ENCODE measurements at regions of chr2 and their contacts with region 1.

Region 1: DNA sequence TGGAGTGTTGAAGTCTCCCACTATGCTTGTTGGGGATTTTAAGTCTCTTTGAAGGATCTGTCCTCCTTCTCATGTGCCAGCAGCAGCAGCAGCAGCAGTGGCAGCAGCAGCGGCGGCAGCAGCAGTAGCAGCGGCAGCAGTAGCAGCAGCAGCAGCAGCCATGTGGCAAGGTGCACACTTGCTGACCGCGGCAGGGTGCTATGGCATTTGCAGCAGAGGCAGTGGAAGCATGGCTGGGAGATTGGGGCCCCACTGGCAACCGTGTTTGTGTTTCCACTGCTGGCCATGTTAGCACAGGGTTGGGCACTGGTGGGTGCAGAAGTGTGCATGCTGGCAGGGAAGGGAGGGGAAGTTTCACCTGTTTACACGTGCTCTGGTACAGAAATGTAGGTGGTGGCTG is 280.1 kb downstream of the NUP35 start:
- DNase-seq: no peak
- ATAC-seq: no peak
- H3K4me3 ChIP-seq: no peak overlapping the region
- H3K27ac ChIP-seq: no peak overlapping the region
- H3K4me1 ChIP-seq: no peaks in the 10 kb centered on the region
- H3K27me3 ChIP-seq: no peaks in the 10 kb centered on the region
- CTCF ChIP-seq: no peak
- POLR2A ChIP-seq: no peak
- RAD21 ChIP-seq: no peak

Region 2: GRCh38 chr2:182715121-182715895 is 689.1 kb before region 1 on chr2:
- CTCF ChIA-PET with region 1: no interaction called
- POLR2A ChIA-PET with region 1: no interaction called
- RAD21 ChIA-PET with region 1: no interaction called
- intact Hi-C with region 1: no loop called
- DNase-seq: no peak
- ATAC-seq: peak; percentile 2; the same call in 1 of the 2 replicates
- H3K4me3 ChIP-seq: peak overlapping the region; percentile 90 to 97
- H3K27ac ChIP-seq: peak overlapping the region; percentile 71
- H3K4me1 ChIP-seq: peaks cover 8 to 18% of the 10 kb centered on the region in 2 experiments; a peak in 2 of 4 replicates
- H3K27me3 ChIP-seq: no peaks in the 10 kb centered on the region
- CTCF ChIP-seq: no peak
- POLR2A ChIP-seq: no peak
- RAD21 ChIP-seq: no peak

Region 3: GRCh38 chr2:182971820-182972547 is 432.4 kb before region 1 on chr2:
- CTCF ChIA-PET with region 1: no interaction called
- POLR2A ChIA-PET with region 1: no interaction called
- RAD21 ChIA-PET with region 1: no interaction called
- intact Hi-C with region 1: no loop called
- DNase-seq: no peak
- ATAC-seq: no peak
- H3K4me3 ChIP-seq: no peak overlapping the region
- H3K27ac ChIP-seq: no peak overlapping the region
- H3K4me1 ChIP-seq: no peaks in the 10 kb centered on the region
- H3K27me3 ChIP-seq: no peaks in the 10 kb centered on the region
- CTCF ChIP-seq: no peak
- POLR2A ChIP-seq: no peak
- RAD21 ChIP-seq: no peak

Region 4: GRCh38 chr2:183081911-183082310 is 322.5 kb before region 1 on chr2:
- CTCF ChIA-PET with region 1: no interaction called
- POLR2A ChIA-PET with region 1: no interaction called
- RAD21 ChIA-PET with region 1: no interaction called
- intact Hi-C with region 1: loop called (anchors 5 kb)
- DNase-seq: no peak
- ATAC-seq: no peak
- H3K4me3 ChIP-seq: no peak overlapping the region
- H3K27ac ChIP-seq: no peak overlapping the region
- H3K4me1 ChIP-seq: peaks cover 5 to 20% of the 10 kb centered on the region in 2 experiments; a peak in 3 of 4 replicates
- H3K27me3 ChIP-seq: no peaks in the 10 kb centered on the region
- CTCF ChIP-seq: no peak
- POLR2A ChIP-seq: no peak
- RAD21 ChIP-seq: no peak

Region 5: GRCh38 chr2:183284606-183285005 is 119.8 kb before region 1 on chr2:
- CTCF ChIA-PET with region 1: no interaction called
- POLR2A ChIA-PET with region 1: no interaction called
- RAD21 ChIA-PET with region 1: no interaction called
- intact Hi-C with region 1: no loop called
- DNase-seq: no peak
- ATAC-seq: no peak
- H3K4me3 ChIP-seq: no peak overlapping the region
- H3K27ac ChIP-seq: no peak overlapping the region
- H3K4me1 ChIP-seq: peaks cover 0 to 6% of the 10 kb centered on the region in 2 experiments; a peak in 1 of 4 replicates
- H3K27me3 ChIP-seq: no peaks in the 10 kb centered on the region
- CTCF ChIP-seq: no peak
- POLR2A ChIP-seq: no peak
- RAD21 ChIP-seq: no peak

Region 6: DNA sequence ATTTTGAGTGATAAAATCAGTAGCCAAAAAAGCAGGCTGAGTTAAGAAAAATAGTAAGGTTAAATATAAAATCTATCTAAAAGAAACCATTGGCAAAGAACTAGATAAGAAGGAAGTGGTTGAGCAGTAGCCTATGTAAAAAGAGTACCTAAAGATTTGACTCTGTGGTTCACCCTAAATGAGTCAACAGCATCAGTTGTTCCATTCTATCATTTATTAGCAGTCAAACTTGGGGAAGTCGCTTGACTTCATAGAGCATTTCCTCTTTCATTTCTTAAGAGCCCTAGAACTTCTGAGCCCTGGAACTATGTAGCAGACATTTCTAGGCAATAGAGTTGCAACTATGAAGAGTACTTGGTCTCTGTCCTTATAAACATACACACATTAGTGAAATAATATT is 101.5 kb after region 1 on chr2:
- CTCF ChIA-PET with region 1: no interaction called
- POLR2A ChIA-PET with region 1: no interaction called
- RAD21 ChIA-PET with region 1: no interaction called
- intact Hi-C with region 1: no loop called
- DNase-seq: no peak
- ATAC-seq: no peak
- H3K4me3 ChIP-seq: no peak overlapping the region
- H3K27ac ChIP-seq: no peak overlapping the region
- H3K4me1 ChIP-seq: no peaks in the 10 kb centered on the region
- H3K27me3 ChIP-seq: no peaks in the 10 kb centered on the region
- CTCF ChIP-seq: no peak
- POLR2A ChIP-seq: no peak
- RAD21 ChIP-seq: no peak